ENCODE measurements at regions of chr4 and their contacts with region 1.

Region 1: GRCh38 chr4:5798462-5798861 is 87.5 kb downstream of the EVC start:
- DNase-seq: no peak
- H3K4me3 ChIP-seq: no peak overlapping the region
- H3K27ac ChIP-seq: no peak overlapping the region
- H3K4me1 ChIP-seq: no peaks in the 10 kb centered on the region
- CTCF ChIP-seq: no peak

Region 2: GRCh38 chr4:5839751-5840674 is 41.6 kb after region 1 on chr4:
- CTCF ChIA-PET with region 1: no interaction called
- POLR2A ChIA-PET with region 1: no interaction called
- intact Hi-C with region 1: no loop called
- DNase-seq: no peak
- H3K4me3 ChIP-seq: no peak overlapping the region
- H3K27ac ChIP-seq: no peak overlapping the region
- H3K4me1 ChIP-seq: no peaks in the 10 kb centered on the region
- CTCF ChIP-seq: no peak

Region 3: DNA sequence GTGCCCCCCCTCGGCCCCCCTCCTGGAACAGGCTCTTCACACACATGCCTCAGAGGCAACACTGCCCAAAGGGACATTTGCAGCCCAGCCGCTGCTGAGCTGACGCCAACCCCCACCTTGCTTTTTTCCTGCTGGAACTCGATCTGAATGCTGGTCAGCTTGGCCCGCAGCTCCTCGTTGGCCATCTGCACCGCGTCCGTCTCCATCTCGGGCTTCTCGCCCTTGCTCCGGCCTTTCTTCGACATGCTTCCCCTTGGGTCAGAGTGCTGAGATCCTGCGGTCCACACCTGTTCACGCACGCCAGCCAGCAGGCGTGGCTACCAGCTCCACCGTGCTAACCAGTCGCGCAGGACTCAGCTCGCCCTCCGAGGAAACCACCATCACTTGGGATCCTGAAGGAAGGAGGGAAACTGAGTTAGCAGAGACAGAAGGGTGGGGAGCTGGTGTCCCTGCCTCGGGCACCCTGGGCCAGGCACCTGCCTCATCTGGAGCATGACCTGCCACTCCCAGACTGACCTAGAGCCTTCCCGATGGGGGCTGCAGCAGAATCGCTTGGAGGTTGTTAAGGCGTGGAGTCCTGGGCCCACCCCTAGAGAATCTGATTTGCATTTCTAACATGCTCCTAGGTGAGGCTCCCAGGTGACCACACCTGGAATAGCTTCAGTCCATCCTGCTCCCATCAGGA is 314.3 kb after region 1 on chr4:
- CTCF ChIA-PET with region 1: interaction called, 10 read pairs
- POLR2A ChIA-PET with region 1: no interaction called
- intact Hi-C with region 1: no loop called
- DNase-seq: no peak
- H3K4me3 ChIP-seq: no peak overlapping the region
- H3K27ac ChIP-seq: no peak overlapping the region
- H3K4me1 ChIP-seq: no peaks in the 10 kb centered on the region
- CTCF ChIP-seq: no peak

Measured in OCI-LY7 (cell line).